Left colon (tissue), 2 donors: ENCODE measurements at regions of chr2 and their contacts with region 1.

Region 1: GRCh38 chr2:10412384-10412783 is 35.7 kb downstream of the ODC1 start:
- DNase-seq: peak in 1 of 2 donors; percentile 54
- ATAC-seq: no peak

Region 2: DNA sequence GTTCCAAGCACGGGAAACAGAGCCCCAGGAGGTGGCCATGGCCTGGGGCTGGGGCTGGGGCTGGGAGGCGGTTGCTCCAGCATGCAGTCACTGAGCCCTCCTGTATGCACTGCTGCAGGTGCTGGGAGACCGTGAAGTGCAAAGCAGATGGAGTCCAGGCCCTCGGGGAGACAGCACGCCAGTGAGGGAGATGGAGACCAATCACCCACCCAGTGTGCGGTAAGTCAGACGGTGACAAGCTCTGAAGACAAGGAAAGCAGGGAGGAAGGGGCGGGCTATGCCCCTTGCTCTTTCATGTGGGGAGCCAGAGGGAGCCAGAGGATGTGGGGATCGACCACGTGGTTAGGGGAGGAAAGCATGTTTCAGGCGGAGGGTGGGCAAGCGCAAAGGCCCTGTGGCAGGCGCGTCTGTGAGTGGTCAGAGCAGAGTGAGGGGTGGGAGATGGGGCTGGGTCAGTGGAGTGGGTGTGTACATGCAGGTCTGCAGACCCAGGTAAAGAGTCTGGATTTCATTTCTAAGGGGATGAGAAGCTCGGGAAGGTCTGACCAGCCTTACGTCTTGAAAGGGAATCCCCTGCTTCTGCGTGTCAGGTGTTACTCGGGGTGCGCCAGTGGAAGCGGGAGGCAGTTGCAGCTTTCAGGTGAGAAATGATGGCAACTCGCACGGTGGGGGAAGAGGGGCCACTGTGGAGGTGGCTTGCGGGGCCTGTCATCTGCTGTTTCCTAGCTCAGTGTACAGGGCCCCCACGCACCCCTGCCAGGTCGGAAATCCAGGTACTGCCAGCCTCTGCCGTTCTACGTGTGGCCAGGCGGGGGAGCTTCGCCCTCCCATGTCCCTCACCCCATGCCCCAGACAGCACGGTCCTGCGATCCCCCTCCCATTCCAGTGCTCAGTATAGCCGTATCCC is 270.4 kb before region 1 on chr2:
- intact Hi-C with region 1: loop called in 1 of 2 experiments (anchors 10 kb)
- DNase-seq: peak in 1 of 2 donors; percentile 49
- ATAC-seq: peak; percentile 86

Region 3: DNA sequence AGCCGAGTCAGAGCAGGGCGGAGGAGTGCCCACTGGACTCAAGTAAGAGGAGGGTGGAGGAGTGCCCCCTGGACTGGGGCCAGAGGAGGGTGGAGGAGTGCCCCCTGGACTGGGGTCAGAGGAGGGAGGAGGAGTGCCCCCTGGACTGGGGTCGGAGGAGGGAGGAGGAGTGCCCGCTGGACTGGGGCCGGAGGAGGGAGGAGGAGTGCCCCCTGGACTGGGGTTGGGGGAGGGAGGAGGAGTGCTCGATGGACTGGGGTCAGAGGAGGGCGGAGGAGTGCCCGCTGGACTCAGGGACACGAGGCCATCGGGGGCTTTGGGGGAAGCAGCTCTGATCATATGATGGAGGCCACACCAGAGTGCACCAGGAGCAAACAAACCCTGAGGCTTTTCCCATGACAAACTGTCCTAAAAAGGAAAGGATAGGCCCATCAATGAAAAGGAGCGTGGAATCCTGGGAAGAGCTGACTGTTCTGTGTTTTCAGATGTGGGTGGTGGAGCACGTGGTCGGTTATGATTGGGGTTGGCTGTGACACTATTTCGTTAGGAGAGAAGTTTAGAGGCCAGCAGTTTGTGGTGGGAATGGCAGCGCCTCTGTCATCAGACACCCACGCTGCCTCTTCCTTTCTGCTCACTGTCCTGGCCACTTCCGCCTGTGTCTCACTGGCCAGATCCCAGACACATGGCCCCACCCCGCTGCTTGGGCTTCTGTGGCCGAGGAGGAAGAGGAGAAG is 134.2 kb before region 1 on chr2:
- intact Hi-C with region 1: loop called in 1 of 2 experiments (anchors 10 kb)
- DNase-seq: peak; percentile 53 to 59
- ATAC-seq: peak; percentile 65

Region 4: GRCh38 chr2:10668402-10669012 is 256.1 kb after region 1 on chr2:
- intact Hi-C with region 1: no loop called
- DNase-seq: no peak
- ATAC-seq: peak; percentile 59